Heart left ventricle (tissue), 16 donors: ENCODE measurements at regions of chr9 and their contacts with region 1.

Region 1: GRCh38 chr9:75644649-75645048 is 245.8 kb upstream of the PCSK5 start:
- DNase-seq: peak in 1 of 5 donors; percentile 55
- ATAC-seq: peak in 2 of 4 donors; percentile 7 to 50
- H3K4me3 ChIP-seq: no peak overlapping the region
- H3K27ac ChIP-seq: no peak overlapping the region
- H3K4me1 ChIP-seq: peaks cover 0 to 21% (median 5%) of the 10 kb centered on the region in 12 donors
- H3K27me3 ChIP-seq: no peaks in the 10 kb centered on the region
- CTCF ChIP-seq: no peak
- POLR2A ChIP-seq: no peak

Region 2: DNA sequence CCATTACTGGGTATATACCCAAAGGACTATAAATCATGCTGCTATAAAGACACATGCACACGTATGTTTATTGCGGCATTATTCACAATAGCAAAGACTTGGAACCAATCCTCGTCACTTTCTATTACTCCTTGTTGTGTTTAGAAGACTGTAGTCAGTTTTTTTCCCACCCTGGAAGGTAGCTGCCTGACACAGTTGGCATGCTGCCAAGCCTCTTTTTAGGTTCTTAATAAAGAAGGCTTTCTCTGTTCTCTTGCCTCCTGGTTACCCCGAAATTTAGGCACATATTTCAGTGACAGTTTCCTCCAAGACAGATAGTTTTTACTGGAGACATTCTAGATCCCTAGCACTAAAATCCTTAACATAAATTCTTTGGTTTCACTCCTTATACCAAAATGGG is 40.4 kb after region 1 on chr9:
- intact Hi-C with region 1: loop called in 1 of 10 experiments (anchors 5 kb)
- DNase-seq: no peak
- ATAC-seq: no peak
- H3K4me3 ChIP-seq: no peak overlapping the region
- H3K27ac ChIP-seq: no peak overlapping the region
- H3K4me1 ChIP-seq: peaks cover 0 to 10% (median 0%) of the 10 kb centered on the region in 12 donors
- H3K27me3 ChIP-seq: no peaks in the 10 kb centered on the region
- CTCF ChIP-seq: no peak
- POLR2A ChIP-seq: no peak

Region 3: GRCh38 chr9:75699017-75699416 is 54.4 kb after region 1 on chr9:
- intact Hi-C with region 1: loop called in 1 of 10 experiments (anchors 5 kb)
- DNase-seq: no peak
- ATAC-seq: peak in 3 of 4 donors; percentile 42 to 85 (median 78)
- H3K4me3 ChIP-seq: no peak overlapping the region
- H3K27ac ChIP-seq: peak overlapping the region in 8 of 12 donors; percentile 22 to 66 (median 48)
- H3K4me1 ChIP-seq: peaks cover 0 to 10% (median 4%) of the 10 kb centered on the region in 12 donors
- H3K27me3 ChIP-seq: no peaks in the 10 kb centered on the region
- CTCF ChIP-seq: no peak
- POLR2A ChIP-seq: no peak

Region 4: DNA sequence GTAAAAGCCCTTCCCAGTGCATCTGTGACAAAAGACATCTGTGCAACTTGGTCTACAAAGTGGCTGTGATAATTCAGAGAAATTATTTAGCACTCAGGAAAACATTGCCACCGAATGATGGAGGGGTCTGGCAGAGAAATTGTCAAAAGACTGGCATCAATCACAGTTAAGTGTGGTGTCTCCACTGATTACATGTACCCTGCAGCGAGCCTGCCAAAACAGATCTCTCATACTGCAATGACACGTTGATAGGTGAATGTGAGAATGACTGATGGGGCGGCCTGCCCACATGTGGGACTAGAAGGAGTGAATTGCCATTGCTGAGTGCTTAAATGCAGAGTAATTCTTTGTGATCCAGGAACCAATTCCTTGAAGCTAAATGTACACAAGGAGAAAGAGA is 109.4 kb after region 1 on chr9:
- intact Hi-C with region 1: loop called in 1 of 10 experiments (anchors 10 kb)
- DNase-seq: peak; percentile 52 to 88 (median 67)
- ATAC-seq: peak; percentile 98 to 99 (median 99)
- H3K4me3 ChIP-seq: no peak overlapping the region
- H3K27ac ChIP-seq: peak overlapping the region in 1 of 12 donors; percentile 31
- H3K4me1 ChIP-seq: peaks cover 0 to 4% (median 0%) of the 10 kb centered on the region in 12 donors
- H3K27me3 ChIP-seq: no peaks in the 10 kb centered on the region
- CTCF ChIP-seq: no peak
- POLR2A ChIP-seq: no peak